ENCODE measurements at regions of chr20 and their contacts with region 1.

Region 1: GRCh38 chr20:40689943-40690835 is 1.2 kb upstream of the MAFB start:
- DNase-seq: peak; percentile 52
- H3K4me3 ChIP-seq: peak overlapping the region; percentile 63
- CTCF ChIP-seq: peak; percentile 90

Region 2: DNA sequence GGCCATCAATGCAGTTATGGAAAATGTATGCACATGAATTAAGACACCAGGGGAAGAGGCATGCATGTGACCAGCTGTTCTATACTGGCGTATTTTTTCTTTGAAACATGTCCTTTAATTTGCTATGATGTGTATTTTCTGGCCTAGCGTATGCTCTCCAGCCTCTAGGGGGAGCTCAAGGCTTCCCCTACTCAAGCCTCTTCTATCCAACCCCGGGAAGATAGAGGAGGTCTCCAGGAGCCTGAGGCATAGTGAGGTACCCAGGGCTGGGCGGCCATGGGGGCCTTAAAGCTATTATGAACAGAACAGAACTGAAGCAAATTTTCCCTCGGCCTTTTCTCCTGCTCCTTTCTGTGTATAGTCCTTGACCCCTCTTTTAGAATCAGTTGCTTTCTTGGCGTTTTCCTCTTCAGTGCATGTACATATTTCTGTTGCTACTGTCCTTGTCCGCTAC is 530.1 kb before region 1 on chr20:
- CTCF ChIA-PET with region 1: interaction called, 12 read pairs
- POLR2A ChIA-PET with region 1: interaction called, 5 read pairs
- DNase-seq: no peak
- H3K4me3 ChIP-seq: no peak overlapping the region
- CTCF ChIP-seq: peak; percentile 65

Region 3: GRCh38 chr20:40265825-40266533 is 424.2 kb before region 1 on chr20:
- CTCF ChIA-PET with region 1: interaction called, 46 read pairs
- POLR2A ChIA-PET with region 1: interaction called, 9 read pairs
- DNase-seq: no peak
- H3K4me3 ChIP-seq: no peak overlapping the region
- CTCF ChIP-seq: peak; percentile 68

Region 4: DNA sequence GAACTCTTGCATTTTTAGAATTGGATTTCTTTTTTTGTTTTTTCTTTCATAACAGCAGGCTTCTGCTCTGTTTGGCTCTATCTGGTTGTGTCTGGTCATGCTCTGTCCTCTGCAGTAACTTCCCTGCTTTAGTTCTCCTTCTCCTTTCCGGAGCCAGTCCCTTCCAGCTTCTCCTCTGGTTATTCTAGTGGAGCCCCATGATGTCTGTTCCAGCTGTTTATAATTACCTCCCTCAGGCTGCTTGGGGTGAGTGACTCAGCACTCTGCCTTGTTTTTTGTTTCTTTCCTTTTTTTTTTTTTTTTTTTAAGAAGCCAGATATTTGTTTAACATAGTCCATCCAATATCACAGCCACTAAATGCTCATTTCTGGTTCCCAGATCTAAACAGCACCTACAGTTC is 410.8 kb before region 1 on chr20:
- CTCF ChIA-PET with region 1: interaction called, 8 read pairs
- POLR2A ChIA-PET with region 1: interaction called, 17 read pairs
- DNase-seq: peak; percentile 37
- H3K4me3 ChIP-seq: no peak overlapping the region
- CTCF ChIP-seq: no peak

Region 5: DNA sequence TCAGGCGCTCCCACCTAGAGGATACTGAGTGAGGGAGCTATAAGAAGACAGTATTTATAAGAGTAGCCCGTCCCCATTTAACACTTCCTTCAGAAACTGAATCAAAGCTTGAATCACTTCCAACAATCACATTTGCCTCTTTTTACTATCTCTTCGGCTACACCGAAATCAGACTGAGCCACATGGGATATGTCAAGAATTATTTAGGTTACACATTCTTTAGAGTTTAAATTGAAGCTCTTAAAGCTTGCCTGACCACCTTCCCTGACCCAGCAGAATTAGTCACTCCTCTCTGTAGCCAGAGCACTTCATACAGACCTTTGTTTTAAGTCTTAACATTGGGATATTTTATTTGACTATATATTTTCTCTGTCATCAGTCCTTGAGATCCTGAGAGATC is 164.8 kb before region 1 on chr20:
- CTCF ChIA-PET with region 1: interaction called, 3 read pairs
- POLR2A ChIA-PET with region 1: interaction called, 24 read pairs
- DNase-seq: peak; percentile 54
- H3K4me3 ChIP-seq: no peak overlapping the region
- CTCF ChIP-seq: no peak

Region 6: DNA sequence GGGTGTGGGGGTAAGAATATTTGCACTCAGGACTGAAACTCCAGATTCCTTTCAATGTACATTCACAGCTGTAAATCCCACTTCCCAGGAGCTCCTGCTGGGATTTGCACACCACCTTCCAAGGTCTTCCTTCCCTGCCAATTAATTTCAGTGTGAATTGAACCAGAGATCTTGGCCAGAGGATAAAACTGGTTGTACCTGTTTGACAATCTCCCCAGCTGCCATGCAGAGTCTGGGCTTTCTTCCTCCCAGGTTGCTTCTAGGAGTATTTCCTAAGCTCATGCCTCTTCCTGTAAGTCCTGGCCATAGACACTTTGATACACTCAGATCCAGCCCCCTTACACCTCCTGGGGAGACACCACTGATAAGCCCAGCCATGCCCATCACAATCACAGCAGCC is 16.8 kb before region 1 on chr20:
- CTCF ChIA-PET with region 1: interaction called, 12 read pairs
- POLR2A ChIA-PET with region 1: interaction called, 13 read pairs
- DNase-seq: no peak
- H3K4me3 ChIP-seq: no peak overlapping the region
- CTCF ChIP-seq: no peak

Region 7: GRCh38 chr20:40718982-40719729 is 29.0 kb after region 1 on chr20:
- CTCF ChIA-PET with region 1: no interaction called
- POLR2A ChIA-PET with region 1: no interaction called
- DNase-seq: no peak
- H3K4me3 ChIP-seq: no peak overlapping the region
- CTCF ChIP-seq: no peak

Region 8: GRCh38 chr20:40849456-40849855 is 159.3 kb after region 1 on chr20:
- CTCF ChIA-PET with region 1: no interaction called
- POLR2A ChIA-PET with region 1: no interaction called
- DNase-seq: no peak
- H3K4me3 ChIP-seq: no peak overlapping the region
- CTCF ChIP-seq: no peak

Measured in AG04449 (cell line).